Activated CD4-positive, alpha-beta memory T cell treated with anti-CD3 and anti-CD28 coated beads for 36 hours (primary cell): ENCODE measurements at regions of chr5 and their contacts with region 1.

Region 1: GRCh38 chr5:150409638-150410523 is 2.8 kb downstream of the CD74 start:
- DNase-seq: peak; percentile 70
- H3K4me3 Mint-ChIP-seq: peak overlapping the region; percentile 97
- H3K27ac Mint-ChIP-seq: peak overlapping the region; percentile 99
- H3K4me1 Mint-ChIP-seq: peaks cover 39% of the 10 kb centered on the region
- H3K27me3 Mint-ChIP-seq: no peaks in the 10 kb centered on the region

Region 2: DNA sequence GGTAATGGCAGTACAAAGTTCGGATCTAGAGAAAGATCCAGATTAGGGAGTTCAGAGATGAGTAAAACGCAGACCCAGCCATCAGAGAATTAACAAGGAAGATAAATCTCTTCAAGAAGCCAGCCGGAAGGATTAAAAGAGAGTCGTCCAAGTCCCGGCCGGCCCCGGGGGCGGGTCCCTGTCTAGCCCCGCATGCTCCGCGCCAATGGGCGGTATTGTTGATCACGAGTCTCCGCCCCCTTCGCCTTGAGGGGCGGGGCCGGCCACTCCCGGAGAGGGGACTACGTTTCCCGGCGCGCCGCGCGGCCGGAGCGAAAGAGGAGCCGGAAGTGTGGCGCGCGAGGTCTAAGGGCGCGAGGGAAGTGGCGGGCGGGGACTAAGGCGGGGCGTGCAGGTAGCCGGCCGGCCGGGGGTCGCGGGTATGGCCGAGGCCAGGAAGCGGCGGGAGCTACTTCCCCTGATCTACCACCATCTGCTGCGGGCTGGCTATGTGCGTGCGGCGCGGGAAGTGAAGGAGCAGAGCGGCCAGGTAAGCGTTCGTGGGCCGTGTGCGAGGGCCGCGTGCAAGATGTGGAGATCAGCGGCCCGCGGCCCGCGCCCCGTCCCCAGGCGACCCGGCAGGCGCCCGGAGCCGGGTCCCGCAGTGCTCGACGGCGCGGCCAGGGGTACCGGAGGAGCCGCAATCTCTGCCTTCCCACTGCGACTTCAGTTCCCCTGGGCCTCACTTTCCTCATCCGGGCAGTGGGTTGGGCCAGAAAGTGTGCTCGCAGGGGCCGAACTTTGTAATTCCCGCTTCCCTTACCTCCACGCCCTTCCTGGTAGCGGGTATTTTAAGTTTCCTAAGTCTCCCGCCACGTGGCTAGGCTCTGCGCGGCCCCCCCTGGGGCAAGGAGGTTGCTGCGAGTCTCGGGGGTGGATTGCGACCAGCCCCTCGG is 52.3 kb before region 1 on chr5 and contains the start of gene TCOF1:
- CTCF ChIA-PET with region 1: interaction called, 4 read pairs
- POLR2A ChIA-PET with region 1: interaction called, 10 read pairs
- intact Hi-C with region 1: loop called (anchors 1 kb)
- DNase-seq: peak; percentile 98
- H3K4me3 Mint-ChIP-seq: peak within 1 kb of the TSS; percentile 89
- H3K27ac Mint-ChIP-seq: peak within 1 kb of the TSS; percentile 81
- H3K4me1 Mint-ChIP-seq: peaks cover 35% of the 10 kb centered on the region
- H3K27me3 Mint-ChIP-seq: no peaks in the 10 kb centered on the region
- total RNA-seq, gene TCOF1: 91.3 to 95.0 TPM

Region 3: GRCh38 chr5:150398722-150399523 is 11.0 kb before region 1 on chr5:
- CTCF ChIA-PET with region 1: interaction called, 13 read pairs
- POLR2A ChIA-PET with region 1: interaction called, 6 read pairs
- intact Hi-C with region 1: no loop called
- DNase-seq: no peak
- H3K4me3 Mint-ChIP-seq: no peak overlapping the region
- H3K27ac Mint-ChIP-seq: no peak overlapping the region
- H3K4me1 Mint-ChIP-seq: no peaks in the 10 kb centered on the region
- H3K27me3 Mint-ChIP-seq: no peaks in the 10 kb centered on the region

Region 4: GRCh38 chr5:150449517-150450339 is 39.8 kb after region 1 on chr5 and contains the start of gene RPS14:
- CTCF ChIA-PET with region 1: interaction called, 25 read pairs
- POLR2A ChIA-PET with region 1: interaction called, 6 read pairs
- intact Hi-C with region 1: loop called (anchors 1 kb)
- DNase-seq: peak; percentile 96
- H3K4me3 Mint-ChIP-seq: peak within 1 kb of the TSS; percentile 91
- H3K27ac Mint-ChIP-seq: peak within 1 kb of the TSS; percentile 99
- H3K4me1 Mint-ChIP-seq: peaks cover 32% of the 10 kb centered on the region
- H3K27me3 Mint-ChIP-seq: no peaks in the 10 kb centered on the region
- total RNA-seq, gene RPS14: 3,748 to 3,882 TPM

Region 5: GRCh38 chr5:150523472-150524350 is 113.8 kb after region 1 on chr5:
- CTCF ChIA-PET with region 1: no interaction called
- POLR2A ChIA-PET with region 1: no interaction called
- intact Hi-C with region 1: no loop called
- DNase-seq: peak; percentile 15
- H3K4me3 Mint-ChIP-seq: no peak overlapping the region
- H3K27ac Mint-ChIP-seq: no peak overlapping the region
- H3K4me1 Mint-ChIP-seq: no peaks in the 10 kb centered on the region
- H3K27me3 Mint-ChIP-seq: no peaks in the 10 kb centered on the region